Endothelial cell of umbilical vein (primary cell): ENCODE measurements at regions of chr14 and their contacts with region 1.

Region 1: DNA sequence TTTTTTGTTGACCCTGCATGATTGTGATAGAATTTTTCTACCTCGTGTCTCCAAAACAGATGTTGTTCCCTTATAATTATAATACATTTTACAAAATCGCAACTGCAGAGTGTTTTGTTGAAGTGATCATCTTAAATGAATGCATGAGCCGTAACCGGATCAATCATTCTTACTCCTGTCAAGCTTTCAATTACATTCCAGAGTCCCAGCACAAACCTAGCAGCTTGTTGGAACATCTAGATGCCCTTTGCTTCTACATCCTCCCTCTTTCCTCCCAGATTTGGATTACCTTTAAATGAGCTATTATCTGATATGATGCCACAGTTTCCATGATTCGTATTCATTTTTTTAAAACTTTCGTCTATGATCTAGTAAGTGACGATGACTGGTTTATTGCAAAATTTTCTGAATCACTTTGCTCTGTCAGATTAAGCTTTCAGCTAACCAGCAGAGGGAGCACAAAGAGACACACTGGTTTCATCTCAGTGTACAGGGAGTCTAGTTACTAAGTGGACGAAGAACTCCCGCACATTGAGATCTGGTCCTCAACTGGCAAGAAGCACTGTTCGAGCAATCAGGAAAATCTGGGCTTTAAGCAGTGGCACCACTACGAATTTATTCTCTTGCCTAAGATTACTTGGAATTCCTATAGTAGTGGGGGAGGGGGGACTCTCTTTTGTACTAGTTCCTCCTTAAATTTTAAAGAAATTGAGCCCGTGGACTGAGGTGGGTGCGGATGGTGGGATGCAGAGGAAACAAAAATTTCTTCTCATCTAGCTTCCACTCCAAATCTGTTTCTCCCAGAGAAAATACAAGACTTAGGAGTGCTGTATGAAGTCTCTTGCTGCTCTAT is 40.9 kb downstream of the TSHR start:
- DNase-seq: peak; percentile 44
- H3K4me3 ChIP-seq: no peak overlapping the region
- H3K27ac ChIP-seq: no peak overlapping the region
- H3K4me1 ChIP-seq: no peaks in the 10 kb centered on the region
- H3K27me3 ChIP-seq: no peaks in the 10 kb centered on the region
- CTCF ChIP-seq: peak; percentile 23 to 46
- POLR2A ChIP-seq: no peak

Region 2: GRCh38 chr14:81164167-81164774 is 168.0 kb after region 1 on chr14:
- CTCF ChIA-PET with region 1: interaction called, 36 read pairs
- POLR2A ChIA-PET with region 1: interaction called, 3 read pairs
- dilution Hi-C with region 1: no loop called
- intact Hi-C with region 1: loop called (anchors 1 kb)
- DNase-seq: peak; percentile 52
- H3K4me3 ChIP-seq: no peak overlapping the region
- H3K27ac ChIP-seq: no peak overlapping the region
- H3K4me1 ChIP-seq: no peaks in the 10 kb centered on the region
- H3K27me3 ChIP-seq: no peaks in the 10 kb centered on the region
- CTCF ChIP-seq: peak; percentile 33 to 47
- POLR2A ChIP-seq: no peak

Region 3: GRCh38 chr14:81211844-81212243 is 215.6 kb after region 1 on chr14:
- CTCF ChIA-PET with region 1: interaction called, 14 read pairs
- POLR2A ChIA-PET with region 1: no interaction called
- dilution Hi-C with region 1: no loop called
- intact Hi-C with region 1: loop called (anchors 5 kb)
- DNase-seq: peak; percentile 24
- H3K4me3 ChIP-seq: no peak overlapping the region
- H3K27ac ChIP-seq: no peak overlapping the region
- H3K4me1 ChIP-seq: no peaks in the 10 kb centered on the region
- H3K27me3 ChIP-seq: no peaks in the 10 kb centered on the region
- CTCF ChIP-seq: peak; percentile 17 to 26
- POLR2A ChIP-seq: no peak